MCF 10A (cell line): ENCODE measurements at regions of chr17 and their contacts with region 1.

Region 1: GRCh38 chr17:30116661-30117551 is at the start of gene NSRP1:
- DNase-seq: peak; percentile 95
- H3K4me3 Mint-ChIP-seq: peak within 1 kb of the TSS; percentile 97
- H3K27ac Mint-ChIP-seq: peak within 1 kb of the TSS; percentile 100
- H3K4me1 Mint-ChIP-seq: peaks cover 15% of the 10 kb centered on the region
- H3K27me3 Mint-ChIP-seq: no peaks in the 10 kb centered on the region
- CTCF ChIP-seq: no peak
- total RNA-seq, gene NSRP1: 40.8 and 57.3 TPM in 2 replicates

Region 2: DNA sequence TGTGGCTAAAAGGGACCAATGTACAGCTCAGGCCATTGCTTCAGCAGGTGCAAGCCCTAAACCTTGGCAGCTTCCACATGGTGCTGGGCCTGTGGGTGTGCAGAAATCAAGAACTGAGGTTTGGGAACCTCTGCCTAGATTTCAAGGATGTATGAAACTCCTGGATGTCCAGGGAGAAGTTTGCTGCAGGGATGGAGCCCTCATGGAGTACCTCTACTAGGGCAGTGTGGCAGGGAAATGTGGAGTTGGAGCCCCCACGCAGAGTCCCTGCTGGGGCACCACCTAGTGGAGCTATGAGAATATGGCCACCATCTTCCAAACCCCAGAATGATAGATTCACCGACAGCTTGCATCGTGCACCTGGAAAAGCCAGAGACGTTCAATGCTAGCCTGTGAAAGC is 162.5 kb before region 1 on chr17:
- CTCF ChIA-PET with region 1: no interaction called
- POLR2A ChIA-PET with region 1: no interaction called
- intact Hi-C with region 1: no loop called
- DNase-seq: no peak
- H3K4me3 Mint-ChIP-seq: no peak overlapping the region
- H3K27ac Mint-ChIP-seq: no peak overlapping the region
- H3K4me1 Mint-ChIP-seq: peaks cover 11% of the 10 kb centered on the region
- H3K27me3 Mint-ChIP-seq: no peaks in the 10 kb centered on the region
- CTCF ChIP-seq: peak; percentile 9

Region 3: DNA sequence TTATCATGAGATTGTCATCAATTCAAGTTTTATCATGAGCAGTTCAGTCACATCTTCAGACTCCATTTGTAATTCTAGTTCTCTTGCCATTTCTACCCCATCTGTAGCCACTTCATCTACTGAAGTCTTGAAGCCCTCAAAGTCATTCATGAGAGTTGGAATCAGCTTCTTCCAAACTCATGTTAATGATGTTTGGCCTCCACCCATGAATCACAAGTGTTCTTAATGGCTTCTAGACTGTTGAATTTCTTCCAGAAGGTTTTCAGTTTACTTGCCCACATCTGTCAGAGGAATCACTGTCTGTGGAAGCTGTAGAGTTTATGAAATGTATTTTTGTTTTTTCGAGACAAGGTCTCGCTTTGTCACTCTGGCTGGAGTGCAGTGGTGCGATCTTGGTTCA is 15.7 kb after region 1 on chr17:
- CTCF ChIA-PET with region 1: no interaction called
- POLR2A ChIA-PET with region 1: interaction called, 22 read pairs
- intact Hi-C with region 1: no loop called
- DNase-seq: no peak
- H3K4me3 Mint-ChIP-seq: no peak overlapping the region
- H3K27ac Mint-ChIP-seq: no peak overlapping the region
- H3K4me1 Mint-ChIP-seq: no peaks in the 10 kb centered on the region
- H3K27me3 Mint-ChIP-seq: no peaks in the 10 kb centered on the region
- CTCF ChIP-seq: no peak

Region 4: DNA sequence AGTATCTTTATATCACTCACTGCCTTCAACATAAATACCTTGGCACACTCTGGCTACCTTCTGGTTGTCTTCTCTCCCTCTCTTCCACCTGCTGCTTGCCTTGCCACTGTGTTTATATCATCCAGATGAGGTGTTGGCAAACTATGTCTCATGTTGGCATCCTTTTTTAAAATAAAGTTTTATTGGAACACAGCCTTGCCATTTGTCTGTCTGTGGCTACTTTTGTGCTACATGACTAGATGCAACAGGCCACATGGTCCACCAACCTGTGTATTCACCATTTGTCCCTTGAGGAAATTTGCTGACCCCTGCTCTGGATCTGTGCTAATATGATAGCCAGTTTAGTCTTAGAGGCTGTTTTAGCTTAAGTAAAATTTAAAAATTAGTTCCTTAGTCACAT is 36.6 kb after region 1 on chr17:
- CTCF ChIA-PET with region 1: no interaction called
- POLR2A ChIA-PET with region 1: no interaction called
- intact Hi-C with region 1: no loop called
- DNase-seq: no peak
- H3K4me3 Mint-ChIP-seq: no peak overlapping the region
- H3K27ac Mint-ChIP-seq: no peak overlapping the region
- H3K4me1 Mint-ChIP-seq: peaks cover 11% of the 10 kb centered on the region
- H3K27me3 Mint-ChIP-seq: no peaks in the 10 kb centered on the region
- CTCF ChIP-seq: no peak

Region 5: GRCh38 chr17:30291543-30292285 is 174.8 kb after region 1 on chr17 and contains the start of gene BLMH:
- CTCF ChIA-PET with region 1: no interaction called
- POLR2A ChIA-PET with region 1: interaction called, 13 read pairs
- intact Hi-C with region 1: no loop called
- DNase-seq: peak; percentile 77
- H3K4me3 Mint-ChIP-seq: peak within 1 kb of the TSS; percentile 84
- H3K27ac Mint-ChIP-seq: peak within 1 kb of the TSS; percentile 33
- H3K4me1 Mint-ChIP-seq: no peaks in the 10 kb centered on the region
- H3K27me3 Mint-ChIP-seq: no peaks in the 10 kb centered on the region
- CTCF ChIP-seq: no peak
- total RNA-seq, gene BLMH: 28.2 and 28.3 TPM in 2 replicates

Region 6: DNA sequence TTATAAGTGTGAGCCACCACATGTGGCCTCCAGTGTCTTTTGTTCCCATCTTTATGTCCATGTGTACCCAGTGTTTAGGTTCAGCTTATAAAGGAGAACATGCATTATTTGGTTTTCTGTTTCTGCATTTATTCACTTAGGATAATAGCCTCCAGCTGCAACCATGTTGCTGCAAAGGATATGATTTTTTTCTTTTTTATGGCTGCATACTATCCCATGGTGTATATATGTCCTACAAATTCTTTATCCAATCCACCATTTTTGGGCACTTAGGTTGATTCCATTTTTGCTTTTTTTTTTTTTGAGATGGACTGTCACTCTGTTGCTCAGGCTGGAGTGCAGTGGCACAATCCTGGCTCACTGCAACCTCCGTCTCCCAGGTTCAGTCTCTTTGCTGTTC is 747.7 kb after region 1 on chr17:
- CTCF ChIA-PET with region 1: no interaction called
- POLR2A ChIA-PET with region 1: no interaction called
- intact Hi-C with region 1: no loop called
- DNase-seq: no peak
- H3K4me3 Mint-ChIP-seq: no peak overlapping the region
- H3K27ac Mint-ChIP-seq: no peak overlapping the region
- H3K4me1 Mint-ChIP-seq: no peaks in the 10 kb centered on the region
- H3K27me3 Mint-ChIP-seq: no peaks in the 10 kb centered on the region
- CTCF ChIP-seq: no peak